Right ventricle myocardium superior (tissue), 1 donor: ENCODE measurements at regions of chr20 and their contacts with region 1.

Region 1: GRCh38 chr20:57167971-57168706 is 98.3 kb downstream of the BMP7 start:
- DNase-seq: peak; percentile 64
- ATAC-seq: peak; percentile 90

Region 2: DNA sequence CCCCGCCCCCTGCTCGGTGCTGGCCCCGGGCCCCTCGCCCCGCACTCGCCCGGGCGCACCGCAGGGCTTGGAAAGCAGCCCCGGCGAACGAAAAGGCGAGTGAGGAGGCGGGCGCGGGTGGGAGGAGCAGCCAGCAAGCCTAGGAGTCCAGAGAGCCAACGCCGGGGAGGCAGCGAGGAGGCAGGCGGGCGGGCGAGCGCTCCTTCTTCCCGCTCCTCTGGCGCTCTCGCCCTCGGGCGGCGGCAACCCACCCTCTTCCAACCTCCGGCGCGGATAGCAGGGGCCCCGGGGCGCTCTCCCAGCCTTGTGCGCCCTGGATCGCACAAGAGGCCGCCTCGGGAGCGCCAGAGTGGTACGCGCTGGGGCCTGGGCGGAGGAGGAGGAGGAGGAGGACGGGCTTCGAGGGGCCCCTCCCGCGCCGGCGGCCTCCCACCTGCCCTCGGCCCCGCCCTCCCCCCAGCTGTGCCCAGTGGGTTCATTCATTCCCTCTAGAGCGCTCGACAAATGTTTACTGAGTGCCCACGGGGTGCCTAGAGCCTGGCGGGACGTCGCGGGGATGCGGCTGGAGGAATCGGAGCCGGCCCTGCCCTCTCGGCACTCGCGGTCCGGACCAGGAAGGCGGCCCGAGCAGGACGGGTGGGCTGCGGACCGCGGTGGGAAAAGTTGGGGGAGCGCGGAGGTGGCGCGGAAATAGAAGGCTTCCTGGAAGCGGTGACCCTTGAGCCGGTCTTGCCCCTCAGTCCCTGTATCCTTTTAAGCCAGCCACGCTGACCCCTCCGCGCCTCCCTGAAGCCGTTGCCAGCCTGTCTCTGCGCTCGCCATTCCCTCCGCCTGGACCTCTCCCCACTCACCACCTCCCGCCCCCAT is 98.4 kb after region 1 on chr20 and contains the start of gene BMP7:
- intact Hi-C with region 1: loop called (anchors 10 kb)
- DNase-seq: no peak
- ATAC-seq: peak; percentile 38
- total RNA-seq, gene BMP7: 23.2 TPM

Region 3: DNA sequence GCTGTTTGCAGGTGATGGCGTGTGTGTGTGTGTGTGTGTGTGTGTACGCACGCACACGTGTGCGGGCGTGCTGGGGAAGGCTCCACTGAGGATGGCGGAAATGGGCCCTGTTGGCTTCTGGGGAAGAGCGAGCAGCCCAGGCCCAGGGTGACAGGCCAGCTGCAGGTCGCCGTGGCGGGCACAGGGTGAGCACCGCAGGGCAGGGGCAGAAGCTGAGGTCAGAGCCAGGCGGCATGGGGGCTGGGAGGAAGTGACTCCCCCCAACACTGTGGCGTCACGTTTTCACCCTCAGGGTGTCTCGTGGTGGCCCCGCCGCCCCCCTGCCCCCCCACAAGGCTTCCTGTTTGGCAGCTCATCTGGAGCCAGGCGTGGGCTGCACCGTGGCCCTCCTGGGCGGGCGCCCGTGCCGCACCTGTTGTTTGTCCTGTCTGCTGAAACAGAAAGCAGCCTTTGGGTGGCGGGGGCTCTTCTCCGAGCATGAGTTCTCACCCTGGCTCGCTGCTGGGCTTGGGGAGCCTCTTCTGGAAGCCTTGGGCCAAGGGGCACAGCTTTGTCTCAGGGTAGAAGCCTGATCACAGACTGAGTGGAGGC is 230.2 kb after region 1 on chr20:
- intact Hi-C with region 1: no loop called
- DNase-seq: peak; percentile 70
- ATAC-seq: peak; percentile 5